Heart right ventricle (tissue), 16 donors: ENCODE measurements at regions of chr1 and their contacts with region 1.

Region 1: DNA sequence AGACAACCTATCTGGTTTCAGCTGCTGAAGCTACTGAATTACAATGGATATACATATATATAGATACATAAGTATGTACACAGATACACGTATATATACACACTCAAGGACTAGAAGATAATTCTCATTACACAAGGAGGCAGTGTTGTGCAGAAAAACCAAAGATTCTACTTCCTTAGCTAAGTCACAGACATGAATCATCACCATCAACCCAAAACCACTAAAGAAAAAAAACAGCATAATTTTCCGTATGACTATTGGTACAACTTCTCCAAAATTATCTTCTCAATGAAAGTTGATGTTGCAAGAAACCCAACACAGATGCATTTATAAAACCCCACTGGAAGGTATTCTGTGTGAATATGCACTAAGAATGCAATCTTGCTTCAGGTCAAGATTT is 36.8 kb upstream of the RPF1 start:
- DNase-seq: peak in 1 of 2 donors; percentile 13
- ATAC-seq: peak in 7 of 8 donors; percentile 58 to 89 (median 83)
- H3K4me3 ChIP-seq: no peak overlapping the region
- H3K27ac ChIP-seq: peak overlapping the region in 1 of 10 donors; percentile 31
- H3K4me1 ChIP-seq: peaks cover 0 to 24% (median 1%) of the 10 kb centered on the region in 9 donors
- H3K27me3 ChIP-seq: peaks cover 0 to 9% (median 0%) of the 10 kb centered on the region in 7 donors
- CTCF ChIP-seq: peak in 8 of 9 donors; percentile 18 to 67 (median 54)

Region 2: DNA sequence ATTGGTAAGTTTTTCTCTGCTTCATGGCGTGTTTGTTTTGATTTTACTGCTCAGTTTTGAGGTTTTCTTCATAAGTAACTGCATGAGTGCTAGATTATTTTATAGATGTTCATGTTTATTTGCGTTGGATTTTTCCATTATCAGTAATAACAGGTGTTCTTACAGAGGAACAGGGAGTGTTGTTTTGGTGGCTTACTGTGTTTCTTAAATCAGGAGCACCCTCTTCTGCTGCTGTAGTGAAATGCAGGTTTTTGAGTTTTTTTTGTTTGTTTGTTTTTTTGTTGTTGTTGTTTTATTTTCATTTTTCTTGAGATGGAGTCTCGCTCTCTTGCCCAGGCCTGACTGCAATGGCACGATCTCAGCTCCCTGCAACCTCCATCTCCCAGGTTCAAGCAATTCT is 99.4 kb after region 1 on chr1:
- intact Hi-C with region 1: loop called in 1 of 10 experiments (anchors 10 kb)
- DNase-seq: no peak
- ATAC-seq: no peak
- H3K4me3 ChIP-seq: no peak overlapping the region
- H3K27ac ChIP-seq: no peak overlapping the region
- H3K4me1 ChIP-seq: no peaks in the 10 kb centered on the region
- H3K27me3 ChIP-seq: no peaks in the 10 kb centered on the region
- CTCF ChIP-seq: peak in 6 of 9 donors; percentile 10 to 41 (median 30)

Region 3: GRCh38 chr1:84758968-84759491 is 316.8 kb after region 1 on chr1:
- intact Hi-C with region 1: loop called in 5 of 10 experiments (anchors 5 to 10 kb)
- DNase-seq: peak in 1 of 2 donors; percentile 34
- ATAC-seq: peak; percentile 39 to 87 (median 79)
- H3K4me3 ChIP-seq: peak overlapping the region in 6 of 10 donors; percentile 14 to 29 (median 22)
- H3K27ac ChIP-seq: peak overlapping the region in 2 of 10 donors; percentile 15 to 49
- H3K4me1 ChIP-seq: peaks cover 0 to 19% (median 5%) of the 10 kb centered on the region in 9 donors
- H3K27me3 ChIP-seq: peaks cover 0 to 9% (median 0%) of the 10 kb centered on the region in 7 donors
- CTCF ChIP-seq: no peak